A549 (cell line): ENCODE measurements at regions of chr14 and their contacts with region 1.

Region 1: GRCh38 chr14:54366736-54367735 is 29.8 kb upstream of the CDKN3 start:
- DNase-seq: peak; percentile 38 to 73
- ATAC-seq: peak; percentile 96 to 99
- H3K4me3 ChIP-seq: no peak overlapping the region
- H3K27ac ChIP-seq: peak overlapping the region; percentile 44 to 49; a peak in 5 of 6 replicates
- H3K4me1 ChIP-seq: peaks cover 13% of the 10 kb centered on the region; the same call in 2 of the 3 replicates
- CTCF ChIP-seq: peak; percentile 71
- EP300 ChIP-seq: no peak
- POLR2A ChIP-seq: no peak
- RAD21 ChIP-seq: peak; percentile 80 to 88

Region 2: DNA sequence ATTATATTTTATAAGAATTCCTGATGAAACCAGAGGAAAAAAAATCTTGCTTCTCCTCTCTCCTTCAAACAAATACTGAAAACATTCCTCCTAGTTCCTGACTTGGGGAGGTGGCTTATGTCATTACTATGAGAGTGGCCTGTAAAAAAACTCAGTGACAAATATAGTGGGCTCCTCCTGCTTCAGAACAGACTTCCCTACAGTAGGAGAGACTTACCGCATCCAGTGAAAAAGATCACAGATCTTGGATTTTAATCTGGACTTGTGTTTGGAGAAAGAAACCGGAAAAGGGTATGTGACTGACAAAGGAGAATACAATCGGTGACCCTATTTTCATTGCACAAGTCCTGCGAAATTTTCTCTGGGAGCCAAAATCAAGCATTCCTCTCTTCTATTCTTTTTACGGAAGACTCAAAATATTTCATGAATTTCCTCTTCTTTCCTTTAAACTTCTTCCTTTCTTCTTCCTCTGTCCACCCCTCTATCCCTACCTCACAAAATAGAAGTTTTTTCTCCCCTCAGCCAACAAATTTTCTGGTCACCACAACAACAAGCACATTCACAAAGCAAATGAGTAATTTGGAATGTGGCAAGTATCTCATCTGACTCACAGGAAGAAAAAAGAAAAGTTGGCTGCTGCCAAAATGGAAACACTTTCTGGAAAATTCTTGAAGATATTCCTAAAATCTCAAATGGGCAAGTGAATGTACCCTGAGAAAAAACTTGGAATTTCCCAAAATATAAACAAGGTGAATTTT is 155.3 kb before region 1 on chr14:
- CTCF ChIA-PET with region 1: no interaction called
- POLR2A ChIA-PET with region 1: no interaction called
- DNase-seq: peak in 1 of 2 experiments; percentile 7
- ATAC-seq: no peak
- H3K4me3 ChIP-seq: no peak overlapping the region
- H3K27ac ChIP-seq: no peak overlapping the region
- H3K4me1 ChIP-seq: no peaks in the 10 kb centered on the region
- CTCF ChIP-seq: no peak
- EP300 ChIP-seq: no peak
- POLR2A ChIP-seq: no peak
- RAD21 ChIP-seq: no peak

Region 3: DNA sequence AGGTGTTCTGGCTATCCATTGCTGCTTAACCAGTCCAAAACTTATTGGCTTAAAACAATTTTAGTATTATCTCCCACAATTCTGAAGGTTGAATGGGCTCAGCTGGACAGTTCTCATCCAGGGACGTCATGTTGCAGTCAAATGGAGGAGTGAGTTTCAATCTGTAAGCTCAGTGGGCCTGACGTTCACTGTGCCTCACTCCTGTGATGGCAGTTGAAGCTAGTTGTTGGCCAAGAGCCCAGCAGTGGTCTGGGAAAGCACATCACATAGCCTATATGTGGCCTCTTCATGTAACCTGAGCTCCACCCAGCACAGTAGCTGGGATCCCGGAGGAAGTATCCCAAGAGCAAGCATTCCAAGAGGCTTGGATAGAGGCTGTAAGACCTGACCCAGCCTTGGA is 10.9 kb before region 1 on chr14:
- CTCF ChIA-PET with region 1: interaction called, 10 read pairs
- POLR2A ChIA-PET with region 1: interaction called, 4 read pairs
- DNase-seq: no peak
- ATAC-seq: peak in 1 of 2 experiments; percentile 34; a peak in 2 of 6 replicates
- H3K4me3 ChIP-seq: no peak overlapping the region
- H3K27ac ChIP-seq: no peak overlapping the region
- H3K4me1 ChIP-seq: no peaks in the 10 kb centered on the region
- CTCF ChIP-seq: no peak
- EP300 ChIP-seq: no peak
- POLR2A ChIP-seq: no peak
- RAD21 ChIP-seq: no peak

Region 4: DNA sequence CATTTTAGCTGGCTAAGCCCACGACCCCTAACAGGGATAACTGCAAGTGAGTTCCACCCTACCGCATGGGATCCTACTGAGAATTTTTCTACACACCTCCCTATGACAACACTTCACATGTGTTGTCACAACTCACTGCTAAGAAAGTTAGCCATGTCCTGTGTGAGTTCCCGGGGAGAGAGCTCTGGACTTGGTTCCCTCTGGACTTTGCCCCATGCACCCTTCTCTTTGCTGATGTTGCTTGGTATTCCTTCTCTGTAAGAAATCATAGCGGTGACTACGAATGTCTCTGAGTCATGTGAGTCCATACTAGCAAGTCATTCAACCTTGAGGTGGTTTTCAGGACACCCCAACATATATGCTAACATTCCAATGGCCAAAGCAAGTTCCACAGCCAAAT is 20.3 kb after region 1 on chr14:
- CTCF ChIA-PET with region 1: interaction called, 12 read pairs
- POLR2A ChIA-PET with region 1: no interaction called
- DNase-seq: no peak
- ATAC-seq: peak; percentile 27 to 39; a peak in 4 of 6 replicates
- H3K4me3 ChIP-seq: no peak overlapping the region
- H3K27ac ChIP-seq: no peak overlapping the region
- H3K4me1 ChIP-seq: no peaks in the 10 kb centered on the region
- CTCF ChIP-seq: no peak
- EP300 ChIP-seq: no peak
- POLR2A ChIP-seq: no peak
- RAD21 ChIP-seq: no peak

Region 5: GRCh38 chr14:54396493-54397335 is 29.7 kb after region 1 on chr14 and contains the start of gene CDKN3:
- CTCF ChIA-PET with region 1: interaction called, 11 read pairs
- POLR2A ChIA-PET with region 1: interaction called, 3 read pairs
- DNase-seq: peak; percentile 97 to 99
- ATAC-seq: peak; percentile 98
- H3K4me3 ChIP-seq: peak within 1 kb of the TSS; percentile 78
- H3K27ac ChIP-seq: peak within 1 kb of the TSS; percentile 81 to 93
- H3K4me1 ChIP-seq: peaks cover 28% of the 10 kb centered on the region
- CTCF ChIP-seq: no peak
- EP300 ChIP-seq: no peak
- POLR2A ChIP-seq: peak; percentile 89
- RAD21 ChIP-seq: no peak
- polyA plus RNA-seq, gene CDKN3: 142 and 154 TPM in 2 replicates